ENCODE measurements at regions of chr1 and their contacts with region 1.

Region 1: GRCh38 chr1:110209715-110210603 is at the start of gene KCNC4:
- DNase-seq: peak; percentile 88
- CTCF ChIP-seq: no peak

Region 2: GRCh38 chr1:110237386-110238152 is 27.6 kb after region 1 on chr1:
- CTCF ChIA-PET with region 1: interaction called, 30 read pairs
- POLR2A ChIA-PET with region 1: no interaction called
- DNase-seq: no peak
- CTCF ChIP-seq: no peak

Region 3: DNA sequence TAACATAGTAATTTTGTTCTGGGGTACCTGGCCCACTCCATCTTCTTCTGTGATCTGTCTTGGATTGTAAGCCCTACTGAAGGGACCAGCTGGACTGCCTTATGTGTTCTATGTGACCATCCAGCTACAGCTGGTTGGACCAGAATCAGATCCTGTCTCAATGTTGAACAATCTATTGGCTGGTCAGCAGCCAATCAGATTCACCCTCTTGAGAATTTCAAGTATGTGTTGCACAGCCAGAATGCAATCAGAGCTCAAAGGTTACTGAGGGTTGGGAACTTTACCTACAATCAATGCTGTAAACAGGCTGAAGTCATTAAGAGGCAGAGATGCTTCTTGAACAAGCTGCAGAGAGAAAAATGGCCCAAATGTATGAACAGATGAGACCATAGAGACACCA is 62.1 kb after region 1 on chr1:
- CTCF ChIA-PET with region 1: interaction called, 31 read pairs
- POLR2A ChIA-PET with region 1: no interaction called
- DNase-seq: no peak
- CTCF ChIP-seq: no peak

Region 4: DNA sequence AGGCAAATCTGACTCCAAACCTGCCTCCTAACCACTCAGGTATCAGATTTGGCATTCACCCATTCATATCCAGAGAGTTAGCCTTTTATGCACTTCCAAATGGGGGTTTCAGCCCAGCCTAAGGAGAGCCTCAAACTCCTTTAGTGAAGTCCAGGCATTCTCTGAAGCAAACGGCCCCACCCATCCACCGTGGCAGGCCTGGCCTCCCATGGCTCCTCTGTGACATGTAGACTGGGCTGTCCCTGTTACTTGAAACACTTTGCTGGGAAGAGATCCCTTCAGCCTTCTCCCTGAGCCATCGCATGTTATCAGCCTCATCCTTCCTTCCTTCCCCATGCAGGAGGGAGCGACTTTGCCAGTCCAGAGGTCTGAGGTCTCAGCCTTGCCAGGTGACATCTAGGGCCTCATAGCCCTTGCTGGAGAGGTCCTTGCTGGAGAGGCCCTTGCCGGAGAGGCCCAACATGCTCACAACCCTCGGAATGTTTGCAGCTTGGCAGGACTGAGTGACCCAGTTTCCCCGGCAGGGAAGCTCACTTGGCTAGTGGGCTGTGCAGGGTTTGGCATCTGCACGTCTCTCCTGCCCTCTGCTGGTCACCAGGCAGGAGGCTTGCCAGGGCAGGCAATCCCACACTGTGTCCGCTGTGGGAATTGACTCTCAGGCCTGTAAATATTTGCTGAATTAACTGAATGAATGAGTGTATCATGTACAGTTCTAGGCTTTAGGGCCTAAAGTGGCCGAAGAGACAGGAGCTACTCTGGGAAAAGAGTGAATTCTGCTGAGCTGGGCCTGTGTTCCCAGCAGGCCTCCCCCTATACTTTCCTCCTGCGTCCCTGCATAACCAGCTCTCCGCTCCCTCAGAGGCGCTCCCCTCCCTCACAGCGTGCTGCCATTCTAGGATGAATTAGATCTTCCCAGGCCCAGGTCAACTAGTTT is 102.5 kb after region 1 on chr1:
- CTCF ChIA-PET with region 1: interaction called, 352 read pairs
- POLR2A ChIA-PET with region 1: no interaction called
- DNase-seq: peak; percentile 71
- CTCF ChIP-seq: peak; percentile 91

Region 5: GRCh38 chr1:110370827-110371226 is 160.9 kb after region 1 on chr1:
- CTCF ChIA-PET with region 1: no interaction called
- POLR2A ChIA-PET with region 1: no interaction called
- DNase-seq: no peak
- CTCF ChIP-seq: no peak

Region 6: GRCh38 chr1:110412576-110412975 is 202.6 kb after region 1 on chr1:
- CTCF ChIA-PET with region 1: interaction called, 19 read pairs
- POLR2A ChIA-PET with region 1: no interaction called
- DNase-seq: peak; percentile 64
- CTCF ChIP-seq: peak; percentile 64

Region 7: GRCh38 chr1:110495926-110496600 is 286.1 kb after region 1 on chr1:
- CTCF ChIA-PET with region 1: interaction called, 114 read pairs
- POLR2A ChIA-PET with region 1: no interaction called
- DNase-seq: peak; percentile 83
- CTCF ChIP-seq: peak; percentile 94